ENCODE measurements at regions of chr10 and their contacts with region 1.

Region 1: DNA sequence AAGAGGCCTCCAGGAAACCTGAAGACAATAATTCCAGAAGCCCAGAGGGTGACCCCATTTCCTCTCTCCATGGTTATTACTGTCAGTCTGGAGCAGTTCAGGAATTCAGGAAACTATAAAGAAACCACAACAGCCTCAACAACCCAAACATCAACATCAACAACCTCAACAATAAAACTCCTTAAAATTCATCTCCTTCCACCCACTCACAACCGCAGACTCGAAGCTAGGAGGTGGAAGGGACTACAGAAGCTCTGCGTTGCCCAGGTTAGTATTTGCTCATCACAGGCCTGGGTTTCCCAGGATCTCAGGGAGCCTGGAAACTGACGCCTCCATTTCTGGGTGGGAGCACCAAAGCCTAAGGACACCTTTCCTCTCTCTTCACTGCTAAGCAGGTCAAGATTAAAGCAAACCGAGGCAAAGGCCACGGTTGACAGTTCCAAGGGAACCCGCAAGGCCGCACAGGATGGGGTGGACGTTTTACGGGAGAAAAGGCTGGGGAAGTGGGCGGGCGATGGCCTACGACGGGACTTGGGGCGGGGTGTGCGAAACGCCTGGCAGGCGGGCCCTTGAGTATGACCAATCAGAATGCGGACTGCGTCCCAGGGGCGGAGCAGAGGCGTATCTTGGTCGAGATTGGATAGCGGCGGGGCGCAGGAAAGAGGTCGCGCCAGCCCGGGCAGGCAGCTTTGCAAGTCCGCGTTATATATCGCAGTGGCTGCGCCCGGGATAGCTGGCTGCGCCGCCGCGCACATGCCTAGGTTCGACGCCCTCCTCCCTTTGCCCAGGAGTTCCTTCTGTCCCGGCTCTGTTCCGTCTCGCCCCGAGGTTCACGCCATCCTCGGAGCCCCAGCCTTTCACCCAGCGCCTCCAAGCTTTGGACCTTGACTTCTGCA is at the start of gene ELOVL3:
- DNase-seq: peak; percentile 94
- CTCF ChIP-seq: no peak

Region 2: DNA sequence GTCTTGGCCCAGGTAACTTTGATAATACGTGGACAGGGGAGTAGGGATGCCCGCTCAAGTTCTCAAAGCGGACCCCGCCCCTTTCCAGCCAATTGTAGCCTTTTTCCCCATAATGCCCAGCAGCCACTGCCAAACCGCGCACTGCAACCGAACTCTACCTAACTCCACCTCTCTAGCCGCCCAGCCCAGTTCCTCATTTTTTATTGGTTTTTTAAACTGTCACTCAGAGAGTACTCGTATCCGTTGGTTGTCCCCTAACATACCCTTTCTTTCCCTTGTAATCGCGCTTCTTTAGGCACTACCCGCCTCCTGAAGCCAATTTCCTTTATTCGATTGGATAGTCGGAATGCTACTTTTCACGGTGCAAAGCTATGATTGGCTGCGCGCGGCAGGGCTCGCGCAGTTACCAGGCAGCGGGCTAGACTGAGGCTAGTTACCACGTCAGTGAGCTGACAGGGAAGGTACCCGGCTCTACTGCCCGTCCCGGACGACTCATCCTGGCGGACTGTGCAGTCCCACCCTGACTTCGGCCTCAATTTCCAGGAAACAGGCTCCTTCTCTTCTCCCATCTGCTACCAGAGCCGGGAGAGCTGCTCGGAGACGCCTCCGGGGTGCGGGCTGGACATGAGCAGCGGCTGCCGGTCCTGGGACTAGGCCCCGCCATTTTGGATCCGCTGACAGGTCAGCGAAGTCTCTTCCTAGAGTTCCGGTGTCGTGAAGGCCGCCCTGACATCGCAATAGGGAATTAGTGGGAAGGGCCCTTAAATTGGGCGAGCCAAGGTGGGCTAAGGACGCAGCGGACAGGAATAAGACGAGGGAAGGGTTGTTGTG is 19.4 kb after region 1 on chr10 and contains the start of gene GBF1:
- CTCF ChIA-PET with region 1: interaction called, 84 read pairs
- POLR2A ChIA-PET with region 1: no interaction called
- DNase-seq: peak; percentile 96
- CTCF ChIP-seq: no peak

Region 3: GRCh38 chr10:102310361-102311024 is 84.6 kb after region 1 on chr10:
- CTCF ChIA-PET with region 1: interaction called, 13 read pairs
- POLR2A ChIA-PET with region 1: no interaction called
- DNase-seq: no peak
- CTCF ChIP-seq: no peak

Region 4: GRCh38 chr10:102384053-102384452 is 158.2 kb after region 1 on chr10:
- CTCF ChIA-PET with region 1: interaction called, 71 read pairs
- POLR2A ChIA-PET with region 1: no interaction called
- DNase-seq: no peak
- CTCF ChIP-seq: no peak

Region 5: DNA sequence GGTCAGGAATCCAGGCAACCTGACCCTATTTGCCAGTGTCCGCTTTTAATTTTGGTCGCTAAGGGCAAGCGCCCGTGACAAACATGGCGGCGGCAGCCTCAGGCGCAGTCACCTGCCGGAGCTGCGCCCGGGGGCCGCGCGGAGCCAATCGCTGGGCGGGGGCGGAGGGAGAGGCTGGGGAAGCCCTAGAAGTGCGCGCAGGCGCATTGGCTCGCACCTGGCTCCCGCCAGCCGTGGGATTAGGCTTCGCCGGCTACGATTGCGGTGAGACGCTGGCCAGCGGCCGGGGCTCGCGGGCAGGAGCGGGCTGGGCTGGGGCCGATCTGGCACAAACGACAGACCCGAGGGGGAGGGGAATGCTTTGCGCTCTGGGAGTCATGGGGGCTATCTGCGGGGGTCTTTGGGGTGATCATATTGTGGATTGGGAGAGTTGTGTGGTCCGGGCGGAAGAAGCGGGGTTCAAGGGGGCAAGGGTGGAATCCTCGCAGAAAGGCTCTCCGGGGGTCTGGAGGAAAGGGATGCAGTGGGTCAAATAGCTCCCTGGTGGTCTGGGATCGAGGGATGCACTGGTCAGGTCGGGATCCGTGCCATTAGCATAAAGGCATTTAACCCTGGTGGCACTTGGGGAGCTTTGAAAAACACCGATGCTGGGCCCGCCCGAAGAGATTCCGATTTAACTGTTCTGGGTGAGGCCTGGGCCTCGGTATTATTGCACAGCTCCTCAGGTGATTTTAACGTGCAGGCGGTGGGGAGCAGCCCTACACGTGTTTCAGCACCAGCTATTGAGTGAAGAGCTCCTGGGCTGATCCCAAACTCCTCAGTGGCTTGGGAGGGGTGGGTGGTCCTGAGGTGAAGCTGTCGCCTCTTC is 235.5 kb after region 1 on chr10:
- CTCF ChIA-PET with region 1: interaction called, 14 read pairs
- POLR2A ChIA-PET with region 1: no interaction called
- DNase-seq: peak; percentile 100
- CTCF ChIP-seq: no peak

Measured in GM10248 (cell line).